ENCODE measurements at regions of chr1 and their contacts with region 1.

Region 1: GRCh38 chr1:53014791-53015507 is 47.1 kb upstream of the PODN start:
- DNase-seq: peak; percentile 51 to 94 (median 79)
- ATAC-seq: peak; percentile 100
- H3K4me3 ChIP-seq: peak overlapping the region; percentile 67 to 68
- H3K4me3 Mint-ChIP-seq: peak overlapping the region; percentile 84
- H3K27ac ChIP-seq: peak overlapping the region; percentile 42 to 48
- H3K27ac Mint-ChIP-seq: peak overlapping the region; percentile 79
- H3K4me1 ChIP-seq: peaks cover 21% of the 10 kb centered on the region
- H3K4me1 Mint-ChIP-seq: peaks cover 38% of the 10 kb centered on the region
- H3K27me3 ChIP-seq: no peaks in the 10 kb centered on the region
- H3K27me3 Mint-ChIP-seq: no peaks in the 10 kb centered on the region
- CTCF ChIP-seq: no peak

Region 2: GRCh38 chr1:52404116-52404986 is 610.6 kb before region 1 on chr1 and contains the starts of genes ORC1 and PRPF38A:
- CTCF ChIA-PET with region 1: no interaction called
- POLR2A ChIA-PET with region 1: no interaction called
- intact Hi-C with region 1: loop called in 1 of 2 experiments (anchors 10 kb)
- DNase-seq: peak; percentile 94 to 99 (median 98)
- ATAC-seq: peak; percentile 92
- H3K4me3 ChIP-seq: peak within 1 kb of the TSS; percentile 87 to 92
- H3K4me3 Mint-ChIP-seq: peak within 1 kb of the TSS; percentile 99
- H3K27ac ChIP-seq: peak within 1 kb of the TSS; percentile 96
- H3K27ac Mint-ChIP-seq: peak within 1 kb of the TSS; percentile 98
- H3K4me1 ChIP-seq: peaks cover 26% of the 10 kb centered on the region
- H3K4me1 Mint-ChIP-seq: peaks cover 42% of the 10 kb centered on the region
- H3K27me3 ChIP-seq: no peaks in the 10 kb centered on the region
- H3K27me3 Mint-ChIP-seq: no peaks in the 10 kb centered on the region
- CTCF ChIP-seq: no peak
- total RNA-seq, gene ORC1: 1.2 to 1.3 TPM
- total RNA-seq, gene PRPF38A: 52.2 to 62.0 TPM

Region 3: GRCh38 chr1:52927212-52928014 is 87.5 kb before region 1 on chr1 and contains the start of gene SCP2:
- CTCF ChIA-PET with region 1: no interaction called
- POLR2A ChIA-PET with region 1: no interaction called
- intact Hi-C with region 1: loop called (anchors 2 to 5 kb)
- DNase-seq: peak; percentile 43 to 90 (median 79)
- ATAC-seq: peak; percentile 95
- H3K4me3 ChIP-seq: peak within 1 kb of the TSS; percentile 83 to 88
- H3K4me3 Mint-ChIP-seq: peak within 1 kb of the TSS; percentile 87
- H3K27ac ChIP-seq: peak within 1 kb of the TSS; percentile 8 to 40
- H3K27ac Mint-ChIP-seq: peak within 1 kb of the TSS; percentile 57
- H3K4me1 ChIP-seq: peaks cover 16% of the 10 kb centered on the region
- H3K4me1 Mint-ChIP-seq: peaks cover 23% of the 10 kb centered on the region
- H3K27me3 ChIP-seq: no peaks in the 10 kb centered on the region
- H3K27me3 Mint-ChIP-seq: no peaks in the 10 kb centered on the region
- CTCF ChIP-seq: no peak
- total RNA-seq, gene SCP2: 25.5 to 27.6 TPM

Region 4: GRCh38 chr1:52970149-52970548 is 44.8 kb before region 1 on chr1:
- CTCF ChIA-PET with region 1: no interaction called
- POLR2A ChIA-PET with region 1: no interaction called
- intact Hi-C with region 1: no loop called
- DNase-seq: peak in 2 of 9 experiments; percentile 19 to 36
- ATAC-seq: no peak
- H3K4me3 ChIP-seq: no peak overlapping the region
- H3K4me3 Mint-ChIP-seq: no peak overlapping the region
- H3K27ac ChIP-seq: no peak overlapping the region
- H3K27ac Mint-ChIP-seq: no peak overlapping the region
- H3K4me1 ChIP-seq: no peaks in the 10 kb centered on the region
- H3K4me1 Mint-ChIP-seq: no peaks in the 10 kb centered on the region
- H3K27me3 ChIP-seq: no peaks in the 10 kb centered on the region
- H3K27me3 Mint-ChIP-seq: no peaks in the 10 kb centered on the region
- CTCF ChIP-seq: no peak

Region 5: DNA sequence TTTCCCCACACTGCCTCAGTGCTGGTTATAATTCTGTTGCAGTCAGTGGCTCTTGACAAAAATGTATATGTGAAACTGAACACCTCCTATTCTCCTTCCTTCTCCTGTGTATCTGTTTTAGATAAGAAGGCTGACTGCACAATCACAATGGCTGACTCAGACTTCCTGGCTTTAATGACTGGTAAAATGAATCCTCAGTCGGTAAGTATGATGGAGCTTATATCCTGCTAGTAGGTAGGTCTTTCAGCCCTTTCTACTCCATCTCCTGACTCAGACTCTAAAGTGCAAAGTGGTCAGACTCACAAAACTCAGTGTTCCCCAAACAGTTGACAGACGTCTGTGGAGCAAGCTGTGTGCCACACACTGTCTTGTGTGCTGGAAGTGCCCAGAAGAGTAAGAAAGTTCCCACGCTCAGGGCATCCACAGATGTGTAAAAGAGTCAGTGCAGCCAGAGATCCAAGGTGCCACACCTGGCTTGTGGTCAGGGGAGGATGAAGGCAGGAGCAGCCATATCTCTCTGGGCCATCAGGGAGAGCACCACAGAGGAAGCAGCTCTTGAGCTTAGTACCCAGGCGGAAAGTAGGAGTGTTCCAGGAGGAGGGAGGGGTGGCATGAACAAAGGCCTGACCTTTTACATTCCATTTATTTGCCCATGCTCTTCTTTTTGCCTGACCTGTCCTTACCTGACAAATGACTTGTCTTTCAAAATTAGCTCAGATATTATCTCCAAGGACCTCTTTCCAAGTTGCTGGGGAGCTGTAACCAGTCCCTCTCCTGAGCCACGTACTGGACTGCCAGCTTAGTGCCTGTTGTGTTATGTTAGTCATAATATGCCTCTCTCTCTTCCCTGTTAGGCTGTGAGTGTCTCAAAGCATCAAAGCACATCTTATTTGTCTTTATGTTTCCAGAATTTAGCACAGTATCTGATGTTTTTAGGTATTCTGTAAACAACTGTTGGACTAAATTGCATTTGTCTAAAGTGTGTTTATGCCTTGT is 33.1 kb after region 1 on chr1:
- CTCF ChIA-PET with region 1: no interaction called
- POLR2A ChIA-PET with region 1: no interaction called
- intact Hi-C with region 1: no loop called
- DNase-seq: no peak
- ATAC-seq: no peak
- H3K4me3 ChIP-seq: no peak overlapping the region
- H3K4me3 Mint-ChIP-seq: no peak overlapping the region
- H3K27ac ChIP-seq: no peak overlapping the region
- H3K27ac Mint-ChIP-seq: peak overlapping the region; percentile 19
- H3K4me1 ChIP-seq: no peaks in the 10 kb centered on the region
- H3K4me1 Mint-ChIP-seq: no peaks in the 10 kb centered on the region
- H3K27me3 ChIP-seq: no peaks in the 10 kb centered on the region
- H3K27me3 Mint-ChIP-seq: no peaks in the 10 kb centered on the region
- CTCF ChIP-seq: no peak

Region 6: DNA sequence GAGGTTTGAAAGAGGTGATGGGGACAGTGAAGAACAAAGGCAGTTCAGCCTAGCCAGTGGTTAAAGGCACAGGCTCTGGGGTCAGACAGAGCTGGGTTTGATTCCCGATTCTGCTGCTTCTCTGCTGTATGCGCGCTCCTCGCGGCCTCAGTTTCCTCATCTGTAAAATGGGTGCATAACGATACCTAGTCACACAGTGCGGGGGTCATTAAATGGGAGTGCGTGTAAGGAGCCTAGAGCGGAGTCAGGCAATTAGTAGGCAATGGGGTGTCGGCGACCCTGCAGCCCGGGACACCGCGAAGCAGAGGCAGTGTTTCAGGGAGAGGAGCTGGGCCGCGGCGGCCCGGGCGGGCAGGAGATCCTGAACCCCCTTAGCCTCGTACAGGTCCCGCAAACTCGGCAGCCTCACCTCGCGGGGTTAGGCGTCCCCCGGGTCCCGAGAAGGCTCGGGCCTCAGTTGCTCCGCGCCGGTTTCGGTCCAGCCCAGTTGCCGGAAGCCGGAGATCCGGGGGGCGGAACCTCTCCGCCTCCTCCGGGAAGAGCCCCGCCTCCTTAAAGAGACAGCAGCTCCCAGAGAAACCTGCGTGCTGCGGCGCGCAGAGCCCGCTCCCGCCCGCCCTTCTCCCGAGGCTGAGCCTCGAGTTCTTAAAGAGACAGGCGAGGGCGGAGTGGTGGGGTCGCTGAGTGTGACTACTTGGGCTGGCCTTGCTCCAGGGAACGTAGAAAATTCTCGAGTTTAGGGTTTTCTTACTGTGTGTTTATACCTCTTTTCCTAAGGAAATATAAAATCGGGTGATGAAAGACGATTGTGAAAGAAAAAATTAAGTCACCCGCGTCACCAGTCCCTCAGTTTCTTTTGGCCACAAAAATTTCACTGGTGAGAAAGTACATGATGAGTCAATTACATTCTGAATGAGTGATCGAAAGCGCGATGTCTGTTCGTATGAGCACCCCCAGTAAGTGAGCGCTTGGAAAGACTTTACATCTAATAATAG is 874.7 kb after region 1 on chr1 and contains the start of gene YIPF1:
- CTCF ChIA-PET with region 1: no interaction called
- POLR2A ChIA-PET with region 1: no interaction called
- intact Hi-C with region 1: loop called in 1 of 2 experiments (anchors 10 kb)
- DNase-seq: peak; percentile 68 to 92 (median 86)
- ATAC-seq: peak; percentile 98
- H3K4me3 ChIP-seq: peak within 1 kb of the TSS; percentile 69 to 97
- H3K4me3 Mint-ChIP-seq: peak within 1 kb of the TSS; percentile 94
- H3K27ac ChIP-seq: peak within 1 kb of the TSS; percentile 42 to 56
- H3K27ac Mint-ChIP-seq: peak within 1 kb of the TSS; percentile 94
- H3K4me1 ChIP-seq: peaks cover 19% of the 10 kb centered on the region
- H3K4me1 Mint-ChIP-seq: peaks cover 49% of the 10 kb centered on the region
- H3K27me3 ChIP-seq: no peaks in the 10 kb centered on the region
- H3K27me3 Mint-ChIP-seq: no peaks in the 10 kb centered on the region
- CTCF ChIP-seq: no peak
- total RNA-seq, gene YIPF1: 4.6 to 5.4 TPM

Measured in CD8-positive, alpha-beta T cell (primary cell).